CD8-positive, alpha-beta T cell (primary cell): ENCODE measurements at regions of chr9 and their contacts with region 1.

Region 1: GRCh38 chr9:112299514-112299913 is 33.9 kb downstream of the PTBP3 start:
- DNase-seq: no peak
- ATAC-seq: no peak
- H3K4me3 ChIP-seq: no peak overlapping the region
- H3K4me3 Mint-ChIP-seq: no peak overlapping the region
- H3K27ac ChIP-seq: no peak overlapping the region
- H3K27ac Mint-ChIP-seq: peak overlapping the region; percentile 27
- H3K4me1 ChIP-seq: peaks cover 7% of the 10 kb centered on the region
- H3K4me1 Mint-ChIP-seq: peaks cover 58% of the 10 kb centered on the region
- H3K27me3 ChIP-seq: no peaks in the 10 kb centered on the region
- H3K27me3 Mint-ChIP-seq: no peaks in the 10 kb centered on the region
- CTCF ChIP-seq: no peak

Region 2: GRCh38 chr9:112241516-112241915 is 58.0 kb before region 1 on chr9:
- CTCF ChIA-PET with region 1: no interaction called
- POLR2A ChIA-PET with region 1: no interaction called
- intact Hi-C with region 1: loop called in 1 of 2 experiments (anchors 5 kb)
- DNase-seq: no peak
- ATAC-seq: no peak
- H3K4me3 ChIP-seq: no peak overlapping the region
- H3K4me3 Mint-ChIP-seq: no peak overlapping the region
- H3K27ac ChIP-seq: no peak overlapping the region
- H3K27ac Mint-ChIP-seq: no peak overlapping the region
- H3K4me1 ChIP-seq: no peaks in the 10 kb centered on the region
- H3K4me1 Mint-ChIP-seq: peaks cover 7% of the 10 kb centered on the region
- H3K27me3 ChIP-seq: no peaks in the 10 kb centered on the region
- H3K27me3 Mint-ChIP-seq: no peaks in the 10 kb centered on the region
- CTCF ChIP-seq: no peak